CD8-positive, alpha-beta T cell (primary cell): ENCODE measurements at regions of chrX and their contacts with region 1.

Region 1: GRCh38 chrX:9163214-9163681 is 129.3 kb upstream of the FAM9B start:
- DNase-seq: no peak
- ATAC-seq: no peak
- H3K4me3 ChIP-seq: no peak overlapping the region
- H3K4me3 Mint-ChIP-seq: no peak overlapping the region
- H3K27ac ChIP-seq: no peak overlapping the region
- H3K27ac Mint-ChIP-seq: no peak overlapping the region
- H3K4me1 ChIP-seq: peaks cover 17% of the 10 kb centered on the region
- H3K4me1 Mint-ChIP-seq: peaks cover 28% of the 10 kb centered on the region
- H3K27me3 ChIP-seq: no peaks in the 10 kb centered on the region
- H3K27me3 Mint-ChIP-seq: no peaks in the 10 kb centered on the region
- CTCF ChIP-seq: no peak

Region 2: DNA sequence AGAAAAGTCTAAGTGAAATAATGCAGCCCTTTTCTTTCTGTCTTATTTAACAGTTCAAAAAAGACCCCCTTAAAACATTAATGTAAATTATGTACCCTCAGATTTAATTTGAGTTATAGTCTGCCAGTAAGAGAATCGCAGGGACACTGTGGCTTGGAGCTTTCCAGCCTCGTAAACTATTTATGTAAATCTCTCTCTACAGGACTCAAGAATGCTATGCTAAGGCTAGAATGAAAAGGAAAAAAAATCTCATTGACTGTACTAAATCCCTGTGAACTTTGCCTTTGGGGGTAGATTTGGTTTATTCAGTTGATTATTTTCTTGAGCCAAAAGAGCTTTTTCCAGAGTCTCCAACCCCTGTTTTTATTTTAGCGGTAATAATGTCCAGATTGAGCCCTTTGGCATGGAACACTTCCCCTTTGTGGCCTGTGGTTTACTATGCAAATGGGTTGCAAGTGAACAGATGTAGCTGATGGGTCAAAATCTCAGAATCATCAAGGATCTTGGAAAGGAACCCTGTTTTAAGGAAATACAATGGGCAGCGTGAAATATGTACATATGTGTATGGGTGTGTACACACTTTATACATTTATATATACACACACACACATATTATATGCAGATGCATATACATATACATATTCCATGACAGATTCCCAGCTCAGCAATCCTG is 202.3 kb before region 1 on chrX:
- CTCF ChIA-PET with region 1: no interaction called
- POLR2A ChIA-PET with region 1: no interaction called
- intact Hi-C with region 1: no loop called
- DNase-seq: peak in 1 of 9 experiments; percentile 1
- ATAC-seq: no peak
- H3K4me3 ChIP-seq: no peak overlapping the region
- H3K4me3 Mint-ChIP-seq: no peak overlapping the region
- H3K27ac ChIP-seq: no peak overlapping the region
- H3K27ac Mint-ChIP-seq: no peak overlapping the region
- H3K4me1 ChIP-seq: no peaks in the 10 kb centered on the region
- H3K4me1 Mint-ChIP-seq: no peaks in the 10 kb centered on the region
- H3K27me3 ChIP-seq: no peaks in the 10 kb centered on the region
- H3K27me3 Mint-ChIP-seq: peaks cover 7% of the 10 kb centered on the region
- CTCF ChIP-seq: no peak

Region 3: DNA sequence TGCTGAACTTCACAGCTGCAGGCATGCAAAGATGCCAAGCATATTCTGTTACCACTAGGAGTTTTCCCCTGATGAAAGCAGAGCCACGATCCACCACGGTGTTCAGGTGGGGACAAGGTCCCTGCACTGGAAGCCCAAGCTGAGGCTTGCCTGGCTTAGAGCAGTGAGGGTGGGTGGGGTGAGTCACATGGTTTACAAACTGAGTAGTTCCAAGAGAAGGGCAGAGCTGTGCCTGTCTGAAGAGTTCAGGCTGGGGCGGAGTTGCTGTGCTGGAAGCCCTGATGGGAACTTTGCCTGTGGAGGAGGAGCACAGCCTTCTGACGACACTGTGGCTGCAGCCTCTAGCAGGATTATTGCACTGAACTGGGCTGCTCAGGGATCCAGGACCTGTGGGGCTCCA is 174.8 kb before region 1 on chrX:
- CTCF ChIA-PET with region 1: no interaction called
- POLR2A ChIA-PET with region 1: interaction called, 3 read pairs
- intact Hi-C with region 1: loop called in 1 of 2 experiments (anchors 5 kb)
- DNase-seq: peak in 4 of 9 experiments; percentile 6 to 42 (median 24)
- ATAC-seq: peak; percentile 7
- H3K4me3 ChIP-seq: no peak overlapping the region
- H3K4me3 Mint-ChIP-seq: no peak overlapping the region
- H3K27ac ChIP-seq: peak overlapping the region in 1 of 2 experiments; percentile 14
- H3K27ac Mint-ChIP-seq: peak overlapping the region; percentile 96
- H3K4me1 ChIP-seq: peaks cover 26% of the 10 kb centered on the region
- H3K4me1 Mint-ChIP-seq: peaks cover 29% of the 10 kb centered on the region
- H3K27me3 ChIP-seq: no peaks in the 10 kb centered on the region
- H3K27me3 Mint-ChIP-seq: no peaks in the 10 kb centered on the region
- CTCF ChIP-seq: no peak

Region 4: DNA sequence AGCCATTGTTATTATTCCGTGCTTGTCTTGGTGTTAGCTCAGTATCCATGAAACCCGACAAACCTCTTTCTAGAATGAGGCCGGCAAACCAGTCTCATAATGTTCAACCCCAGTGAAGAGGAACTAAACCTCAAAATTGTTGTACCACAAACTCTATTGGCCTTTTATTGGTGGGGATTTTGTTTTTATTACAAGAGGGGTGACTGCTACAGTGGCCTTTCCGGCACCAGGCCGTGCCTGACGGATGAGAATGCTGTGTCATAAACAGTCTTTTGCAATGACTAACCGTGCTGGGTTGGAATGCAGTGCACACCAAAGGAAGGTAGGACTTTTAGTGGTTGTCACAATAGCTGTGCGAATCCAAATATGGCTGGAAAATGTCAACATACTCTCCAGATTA is 683.8 kb after region 1 on chrX:
- CTCF ChIA-PET with region 1: no interaction called
- POLR2A ChIA-PET with region 1: no interaction called
- intact Hi-C with region 1: no loop called
- DNase-seq: no peak
- ATAC-seq: no peak
- H3K4me3 ChIP-seq: no peak overlapping the region
- H3K4me3 Mint-ChIP-seq: no peak overlapping the region
- H3K27ac ChIP-seq: no peak overlapping the region
- H3K27ac Mint-ChIP-seq: no peak overlapping the region
- H3K4me1 ChIP-seq: no peaks in the 10 kb centered on the region
- H3K4me1 Mint-ChIP-seq: no peaks in the 10 kb centered on the region
- H3K27me3 ChIP-seq: no peaks in the 10 kb centered on the region
- H3K27me3 Mint-ChIP-seq: peaks cover 11% of the 10 kb centered on the region
- CTCF ChIP-seq: no peak

Region 5: GRCh38 chrX:10089378-10089812 is 926.1 kb after region 1 on chrX:
- CTCF ChIA-PET with region 1: no interaction called
- POLR2A ChIA-PET with region 1: no interaction called
- intact Hi-C with region 1: loop called in 1 of 2 experiments (anchors 10 kb)
- DNase-seq: no peak
- ATAC-seq: no peak
- H3K4me3 ChIP-seq: no peak overlapping the region
- H3K4me3 Mint-ChIP-seq: no peak overlapping the region
- H3K27ac ChIP-seq: no peak overlapping the region
- H3K27ac Mint-ChIP-seq: no peak overlapping the region
- H3K4me1 ChIP-seq: peaks cover 12% of the 10 kb centered on the region
- H3K4me1 Mint-ChIP-seq: peaks cover 27% of the 10 kb centered on the region
- H3K27me3 ChIP-seq: no peaks in the 10 kb centered on the region
- H3K27me3 Mint-ChIP-seq: no peaks in the 10 kb centered on the region
- CTCF ChIP-seq: no peak